IMR-90 (cell line): ENCODE measurements at regions of chr15 and their contacts with region 1.

Region 1: GRCh38 chr15:96356494-96357455 is 26.3 kb downstream of the NR2F2 start:
- DNase-seq: peak; percentile 89
- ATAC-seq: peak; percentile 62
- H3K4me3 ChIP-seq: peak overlapping the region; percentile 75
- H3K27ac ChIP-seq: peak overlapping the region; percentile 70
- H3K4me1 ChIP-seq: peaks cover 14% of the 10 kb centered on the region; the same call in 1 of the 2 replicates
- H3K27me3 ChIP-seq: no peaks in the 10 kb centered on the region
- CTCF ChIP-seq: peak; percentile 95
- POLR2A ChIP-seq: no peak
- RAD21 ChIP-seq: peak; percentile 78

Region 2: DNA sequence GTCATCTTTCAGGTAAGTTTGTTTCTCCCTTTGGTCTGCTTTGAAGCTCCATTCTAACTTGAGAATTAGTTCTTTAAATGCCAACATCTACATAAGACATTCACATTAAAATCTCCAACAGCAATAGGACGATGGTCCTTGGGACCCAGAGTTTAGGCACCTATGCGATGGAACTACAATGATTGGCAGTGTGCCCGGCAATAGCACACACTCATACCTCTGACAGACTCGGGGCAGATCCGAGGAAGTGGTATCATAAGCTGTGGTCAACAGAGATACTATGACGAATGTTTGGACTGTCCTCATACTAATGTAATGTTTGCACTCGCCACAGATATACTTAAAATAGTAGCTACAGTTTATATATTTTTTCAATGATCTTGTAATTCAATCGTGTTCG is 60.5 kb before region 1 on chr15:
- CTCF ChIA-PET with region 1: no interaction called
- POLR2A ChIA-PET with region 1: no interaction called
- dilution Hi-C with region 1: no loop called
- in situ Hi-C with region 1: no loop called
- intact Hi-C with region 1: no loop called
- DNase-seq: peak; percentile 95
- ATAC-seq: peak; percentile 83
- H3K4me3 ChIP-seq: no peak overlapping the region
- H3K27ac ChIP-seq: no peak overlapping the region
- H3K4me1 ChIP-seq: peaks cover 2% of the 10 kb centered on the region; the same call in 1 of the 2 replicates
- H3K27me3 ChIP-seq: no peaks in the 10 kb centered on the region
- CTCF ChIP-seq: no peak
- POLR2A ChIP-seq: no peak
- RAD21 ChIP-seq: 0 out of 2 replicates have a peak, but pooled peaks have one; percentile 9

Region 3: DNA sequence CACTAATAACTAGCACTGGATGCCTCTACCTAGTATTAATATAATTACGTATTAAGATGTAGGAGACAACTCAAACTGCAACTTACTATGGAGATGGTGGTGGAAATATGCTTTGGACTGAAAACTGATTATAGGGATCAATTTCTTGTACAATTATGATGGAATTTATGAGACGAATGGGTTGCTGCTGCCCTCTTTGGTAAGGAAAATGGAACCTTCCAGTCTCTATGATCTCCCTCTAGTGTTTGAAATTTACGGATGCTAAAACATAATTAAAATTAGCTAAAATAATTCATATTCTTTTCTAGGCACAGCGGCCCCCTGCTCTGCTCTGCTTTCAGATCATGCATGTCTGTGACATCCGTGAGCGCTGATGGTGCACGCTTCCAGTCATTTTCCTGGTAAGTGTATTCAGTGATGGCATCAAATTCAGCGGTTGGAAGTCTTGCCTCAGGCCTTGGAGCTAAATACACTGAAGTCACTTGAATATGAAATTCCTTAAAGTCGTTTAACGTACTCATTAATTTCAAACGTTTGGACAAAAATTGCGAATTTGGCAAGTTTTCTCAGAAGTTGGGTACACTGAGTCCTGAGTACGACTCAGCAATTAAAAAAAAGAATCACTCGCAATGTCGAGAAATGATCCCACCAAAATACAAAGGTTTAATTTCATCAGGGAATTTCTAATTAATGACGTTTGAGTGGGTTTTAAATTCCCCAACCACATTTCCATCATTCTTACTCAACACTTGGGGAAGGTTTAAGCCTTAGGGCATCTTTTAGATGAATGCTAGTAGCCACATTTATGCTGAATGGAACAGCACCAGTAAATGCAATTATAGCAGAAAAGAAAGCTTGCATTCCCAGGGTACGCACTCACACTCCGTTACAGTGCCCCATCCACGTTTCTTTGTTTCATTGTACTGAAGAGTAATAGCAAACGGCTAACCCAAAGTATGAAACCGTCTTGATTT is 106.3 kb after region 1 on chr15:
- CTCF ChIA-PET with region 1: no interaction called
- POLR2A ChIA-PET with region 1: no interaction called
- dilution Hi-C with region 1: no loop called
- in situ Hi-C with region 1: no loop called
- intact Hi-C with region 1: loop called (anchors 2 kb)
- DNase-seq: peak; percentile 15
- ATAC-seq: no peak
- H3K4me3 ChIP-seq: no peak overlapping the region
- H3K27ac ChIP-seq: no peak overlapping the region
- H3K4me1 ChIP-seq: no peaks in the 10 kb centered on the region
- H3K27me3 ChIP-seq: peaks cover 1% of the 10 kb centered on the region
- CTCF ChIP-seq: peak; percentile 43
- POLR2A ChIP-seq: no peak
- RAD21 ChIP-seq: no peak

Region 4: GRCh38 chr15:96585484-96586386 is 229.0 kb after region 1 on chr15:
- CTCF ChIA-PET with region 1: interaction called, 3 read pairs
- POLR2A ChIA-PET with region 1: no interaction called
- dilution Hi-C with region 1: no loop called
- in situ Hi-C with region 1: no loop called
- intact Hi-C with region 1: loop called (anchors 5 kb)
- DNase-seq: peak; percentile 6
- ATAC-seq: no peak
- H3K4me3 ChIP-seq: no peak overlapping the region
- H3K27ac ChIP-seq: no peak overlapping the region
- H3K4me1 ChIP-seq: no peaks in the 10 kb centered on the region
- H3K27me3 ChIP-seq: no peaks in the 10 kb centered on the region; the same call in 1 of the 2 replicates
- CTCF ChIP-seq: peak; percentile 46
- POLR2A ChIP-seq: no peak
- RAD21 ChIP-seq: peak; percentile 38; the same call in 1 of the 2 replicates

Region 5: GRCh38 chr15:97234851-97235610 is 878.3 kb after region 1 on chr15:
- CTCF ChIA-PET with region 1: no interaction called
- POLR2A ChIA-PET with region 1: no interaction called
- dilution Hi-C with region 1: no loop called
- in situ Hi-C with region 1: no loop called
- intact Hi-C with region 1: loop called (anchors 1 kb)
- DNase-seq: peak; percentile 39
- ATAC-seq: peak; percentile 88
- H3K4me3 ChIP-seq: no peak overlapping the region
- H3K27ac ChIP-seq: no peak overlapping the region
- H3K4me1 ChIP-seq: no peaks in the 10 kb centered on the region
- H3K27me3 ChIP-seq: no peaks in the 10 kb centered on the region
- CTCF ChIP-seq: peak; percentile 78
- POLR2A ChIP-seq: no peak
- RAD21 ChIP-seq: peak; percentile 86

Region 6: DNA sequence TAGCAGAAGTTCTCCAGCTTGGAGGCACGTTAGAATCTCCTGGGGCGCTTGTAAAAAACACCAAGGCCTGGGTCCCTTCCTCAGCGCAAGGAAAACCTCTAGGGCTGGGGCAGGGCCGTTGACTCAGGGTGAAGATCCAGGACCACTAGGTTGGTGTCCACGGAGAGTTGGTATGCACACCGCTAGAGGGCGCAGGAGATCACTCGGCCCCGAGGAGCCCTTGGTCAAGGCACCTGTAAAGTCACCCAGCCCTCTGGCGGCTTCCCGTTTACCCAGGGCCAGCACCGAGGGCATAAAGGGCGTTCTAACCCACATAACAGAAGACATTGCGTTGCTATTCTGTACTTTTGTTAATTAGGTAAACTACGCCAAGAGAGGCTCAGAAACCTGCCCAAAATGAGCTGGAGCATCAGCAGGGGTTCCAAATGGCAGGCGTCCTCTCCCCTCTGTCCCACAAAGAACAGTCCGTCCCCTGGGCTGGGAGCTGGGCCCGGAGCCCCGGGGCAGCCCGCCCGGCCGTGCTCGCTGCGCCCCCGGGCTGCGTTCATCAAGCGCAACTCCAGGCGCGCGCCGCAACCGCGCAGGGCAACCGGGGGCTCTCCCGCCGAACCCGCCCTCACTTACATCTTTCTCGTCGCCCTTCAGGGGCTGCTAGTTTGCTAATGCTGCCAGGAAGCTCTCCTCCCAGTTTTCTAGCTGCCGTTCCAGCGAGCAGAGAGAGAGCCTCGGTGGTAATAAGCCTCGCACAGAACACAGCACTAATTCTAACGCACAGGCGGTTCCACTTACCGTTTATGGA is 1935.9 kb after region 1 on chr15:
- CTCF ChIA-PET with region 1: no interaction called
- POLR2A ChIA-PET with region 1: no interaction called
- dilution Hi-C with region 1: no loop called
- in situ Hi-C with region 1: no loop called
- intact Hi-C with region 1: loop called (anchors 10 kb)
- DNase-seq: no peak
- ATAC-seq: peak; percentile 48
- H3K4me3 ChIP-seq: no peak overlapping the region
- H3K27ac ChIP-seq: no peak overlapping the region
- H3K4me1 ChIP-seq: no peaks in the 10 kb centered on the region
- H3K27me3 ChIP-seq: no peaks in the 10 kb centered on the region
- CTCF ChIP-seq: peak; percentile 41
- POLR2A ChIP-seq: no peak
- RAD21 ChIP-seq: no peak